Activated naive CD4-positive, alpha-beta T cell treated with anti-CD3 and anti-CD28 coated beads for 36 hours (primary cell): ENCODE measurements at regions of chr21 and their contacts with region 1.

Region 1: GRCh38 chr21:17903029-17903806 is 84.1 kb upstream of the C21orf91 start:
- DNase-seq: no peak
- H3K4me3 Mint-ChIP-seq: no peak overlapping the region
- H3K27ac Mint-ChIP-seq: no peak overlapping the region
- H3K4me1 Mint-ChIP-seq: peaks cover 8% of the 10 kb centered on the region
- H3K27me3 Mint-ChIP-seq: no peaks in the 10 kb centered on the region

Region 2: GRCh38 chr21:17679002-17679600 is 224.1 kb before region 1 on chr21:
- CTCF ChIA-PET with region 1: interaction called, 29 read pairs
- intact Hi-C with region 1: loop called (anchors 1 kb)
- DNase-seq: no peak
- H3K4me3 Mint-ChIP-seq: no peak overlapping the region
- H3K27ac Mint-ChIP-seq: no peak overlapping the region
- H3K4me1 Mint-ChIP-seq: peaks cover 11% of the 10 kb centered on the region
- H3K27me3 Mint-ChIP-seq: no peaks in the 10 kb centered on the region

Region 3: DNA sequence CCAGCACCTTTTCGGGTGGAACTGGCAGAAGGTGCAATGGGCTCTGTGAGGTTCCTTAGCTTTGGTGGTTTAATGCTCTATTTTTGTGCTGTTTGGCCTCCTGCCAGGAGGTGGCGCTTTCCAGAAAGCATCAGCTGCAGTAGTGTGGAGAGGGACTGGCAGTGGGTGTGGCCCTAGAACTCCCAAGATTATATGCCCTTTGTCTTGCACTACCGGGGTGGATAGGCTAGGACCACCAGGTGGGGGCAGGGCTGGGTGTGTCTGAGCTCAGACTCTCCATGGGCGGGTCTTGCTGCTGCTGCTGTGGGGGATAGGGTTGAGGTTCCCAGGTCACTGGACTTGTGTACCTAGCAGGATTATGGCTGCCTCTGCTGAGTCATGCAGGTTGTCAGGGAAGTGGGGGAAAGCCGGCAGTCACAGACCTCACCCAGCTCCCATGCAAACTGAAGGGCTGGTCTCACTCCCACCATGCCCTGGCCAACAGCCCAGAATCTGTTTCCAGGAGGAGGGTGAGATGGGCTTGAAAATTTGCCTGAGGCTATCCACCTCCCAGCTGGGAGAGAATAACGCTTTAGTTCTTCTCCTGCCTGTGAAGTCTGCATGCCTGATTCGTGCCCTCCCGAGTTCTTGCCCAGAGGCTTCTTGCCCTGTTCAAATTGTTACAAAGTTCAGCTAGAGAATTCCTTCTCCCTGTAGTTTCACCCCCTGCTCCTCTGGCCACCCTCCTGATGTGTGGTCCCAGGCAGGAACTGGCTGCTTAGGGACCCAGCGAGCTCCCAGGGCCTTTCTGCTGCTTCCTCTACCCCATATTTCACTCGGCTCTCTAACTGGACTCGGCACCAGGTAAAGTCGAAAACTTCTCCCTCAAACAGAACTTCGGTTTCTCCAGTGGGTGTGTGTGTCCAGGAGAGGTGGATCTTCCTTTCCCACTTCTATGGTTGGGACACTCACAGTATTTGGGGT is 214.0 kb before region 1 on chr21:
- CTCF ChIA-PET with region 1: interaction called, 9 read pairs
- intact Hi-C with region 1: loop called (anchors 2 kb)
- DNase-seq: peak; percentile 74
- H3K4me3 Mint-ChIP-seq: no peak overlapping the region
- H3K27ac Mint-ChIP-seq: no peak overlapping the region
- H3K4me1 Mint-ChIP-seq: peaks cover 32% of the 10 kb centered on the region
- H3K27me3 Mint-ChIP-seq: peaks cover 2% of the 10 kb centered on the region

Region 4: DNA sequence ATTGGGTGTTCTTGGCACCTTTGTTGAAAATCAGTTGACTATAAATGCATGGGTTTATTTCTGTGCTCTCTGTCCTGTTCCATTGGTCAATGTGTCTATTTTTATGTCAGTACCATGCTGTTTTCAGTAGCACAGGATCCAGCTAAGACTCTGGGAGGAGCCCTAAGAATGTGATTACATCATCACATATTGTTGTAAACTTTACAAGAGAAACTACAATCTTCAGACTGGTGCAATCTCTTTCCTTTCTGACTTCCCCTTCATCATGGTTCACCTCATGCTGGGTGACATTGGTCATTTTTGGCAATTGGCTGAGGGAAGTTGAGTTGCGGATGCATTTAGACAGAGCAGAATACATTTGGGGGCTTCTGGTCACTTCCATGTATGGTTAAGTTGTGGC is 172.4 kb before region 1 on chr21:
- CTCF ChIA-PET with region 1: interaction called, 3 read pairs
- intact Hi-C with region 1: loop called (anchors 5 kb)
- DNase-seq: no peak
- H3K4me3 Mint-ChIP-seq: no peak overlapping the region
- H3K27ac Mint-ChIP-seq: no peak overlapping the region
- H3K4me1 Mint-ChIP-seq: no peaks in the 10 kb centered on the region
- H3K27me3 Mint-ChIP-seq: no peaks in the 10 kb centered on the region

Region 5: DNA sequence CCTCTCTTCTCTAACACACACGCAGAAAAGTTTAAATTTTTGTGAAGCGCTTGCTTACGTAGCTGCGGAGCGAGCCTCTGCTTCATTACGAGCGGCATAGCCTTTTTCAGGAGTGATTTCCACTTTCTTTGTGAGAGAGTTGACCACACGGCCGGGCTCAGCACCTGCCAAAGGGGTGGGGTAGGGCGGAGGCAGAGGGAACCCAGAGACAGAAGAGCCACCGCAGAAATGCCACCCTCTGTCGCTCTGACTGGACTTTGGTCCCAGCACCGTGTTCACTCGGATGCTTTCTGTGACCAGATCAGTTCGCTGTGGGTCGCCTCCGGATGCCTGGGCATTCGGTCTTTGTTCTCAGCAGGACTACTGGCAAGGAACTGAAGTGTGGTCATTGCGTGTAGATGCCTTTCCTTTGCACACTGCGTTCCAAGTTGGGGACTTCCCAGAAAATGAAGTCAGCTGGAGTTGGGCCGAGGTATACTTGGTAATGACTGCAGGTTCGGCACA is 342.3 kb after region 1 on chr21:
- CTCF ChIA-PET with region 1: no interaction called
- intact Hi-C with region 1: no loop called
- DNase-seq: no peak
- H3K4me3 Mint-ChIP-seq: no peak overlapping the region
- H3K27ac Mint-ChIP-seq: no peak overlapping the region
- H3K4me1 Mint-ChIP-seq: no peaks in the 10 kb centered on the region
- H3K27me3 Mint-ChIP-seq: peaks cover 25% of the 10 kb centered on the region

Region 6: GRCh38 chr21:18275781-18276180 is 372.6 kb after region 1 on chr21:
- CTCF ChIA-PET with region 1: no interaction called
- intact Hi-C with region 1: no loop called
- DNase-seq: no peak
- H3K4me3 Mint-ChIP-seq: no peak overlapping the region
- H3K27ac Mint-ChIP-seq: no peak overlapping the region
- H3K4me1 Mint-ChIP-seq: no peaks in the 10 kb centered on the region
- H3K27me3 Mint-ChIP-seq: no peaks in the 10 kb centered on the region